AG04450 (cell line): ENCODE measurements at regions of chr12 and their contacts with region 1.

Region 1: GRCh38 chr12:113980537-113981337 is 14.6 kb upstream of the RBM19 start:
- DNase-seq: peak; percentile 47
- H3K4me3 ChIP-seq: no peak overlapping the region
- H3K27ac ChIP-seq: no peak overlapping the region
- H3K27me3 ChIP-seq: peaks cover 12% of the 10 kb centered on the region
- CTCF ChIP-seq: peak; percentile 100

Region 2: DNA sequence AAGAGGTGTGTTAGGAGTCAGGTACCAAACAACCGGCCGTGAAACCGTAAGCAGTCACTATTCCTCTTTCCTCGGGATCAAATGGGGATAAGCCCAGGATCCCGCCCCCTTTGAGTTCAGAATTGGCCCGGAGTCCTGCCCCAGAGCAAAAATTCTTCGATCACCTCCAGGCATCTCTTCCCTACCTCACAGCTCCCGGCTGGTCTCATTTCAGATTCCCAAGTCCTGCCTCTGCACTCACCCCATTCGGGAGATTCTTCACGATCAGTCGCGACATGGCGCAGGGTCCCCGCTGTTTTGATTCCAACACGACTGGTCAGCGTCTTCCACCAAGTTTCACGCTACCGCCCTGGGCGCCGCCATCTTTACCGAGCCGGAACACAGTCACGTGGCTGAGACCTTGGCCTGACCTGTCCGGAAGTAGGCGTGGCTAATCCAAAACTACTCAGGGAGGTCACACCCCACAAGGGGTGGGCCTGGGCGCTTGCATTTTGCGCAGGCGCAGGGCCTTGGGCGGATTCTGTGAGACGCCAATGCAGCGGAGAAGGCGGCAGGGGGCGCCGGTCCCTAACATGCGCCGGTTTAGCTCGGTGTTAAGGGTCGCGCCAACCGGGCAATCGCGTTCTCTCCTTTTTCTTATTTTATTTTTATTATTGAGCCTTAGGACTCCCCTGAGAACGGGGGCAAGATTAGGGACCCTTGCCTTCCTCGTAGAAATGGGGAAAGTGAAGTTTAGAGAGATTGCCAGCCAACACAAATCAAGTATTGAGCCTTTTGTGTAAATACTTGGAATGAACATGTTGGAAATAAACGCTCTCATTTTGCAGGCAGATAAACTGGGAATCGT is 14.6 kb before region 1 on chr12 and contains the start of gene RBM19:
- CTCF ChIA-PET with region 1: interaction called, 37 read pairs
- POLR2A ChIA-PET with region 1: no interaction called
- DNase-seq: peak; percentile 94
- H3K4me3 ChIP-seq: peak within 1 kb of the TSS; percentile 92
- H3K27ac ChIP-seq: peak within 1 kb of the TSS; percentile 52
- H3K27me3 ChIP-seq: peaks cover 7% of the 10 kb centered on the region
- CTCF ChIP-seq: peak; percentile 94
- polyA plus RNA-seq, gene RBM19: 10.6 and 12.4 TPM in 2 replicates

Region 3: GRCh38 chr12:114166362-114166761 is 185.6 kb after region 1 on chr12:
- CTCF ChIA-PET with region 1: interaction called, 10 read pairs
- POLR2A ChIA-PET with region 1: no interaction called
- DNase-seq: peak; percentile 6
- H3K4me3 ChIP-seq: no peak overlapping the region
- H3K27ac ChIP-seq: no peak overlapping the region
- H3K27me3 ChIP-seq: no peaks in the 10 kb centered on the region
- CTCF ChIP-seq: peak; percentile 68

Region 4: DNA sequence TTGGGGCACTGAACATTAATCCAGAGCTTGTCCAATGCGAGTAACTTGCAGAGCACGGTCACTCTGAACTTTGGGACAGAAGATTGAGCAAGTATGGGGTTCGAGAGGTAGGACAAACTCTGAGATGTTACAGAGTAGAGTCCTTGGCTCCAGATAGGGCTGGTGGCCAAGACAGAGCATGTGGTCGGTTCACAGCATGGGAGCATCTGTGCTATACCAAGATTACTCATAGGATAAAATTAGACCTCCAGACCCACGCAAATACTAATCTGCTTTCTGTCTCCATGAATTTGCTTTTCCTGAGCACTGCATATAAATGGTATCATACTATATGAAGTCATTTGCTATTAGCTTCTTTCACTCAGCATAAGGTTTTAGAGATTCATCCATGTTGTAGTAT is 518.6 kb after region 1 on chr12:
- CTCF ChIA-PET with region 1: interaction called, 12 read pairs
- POLR2A ChIA-PET with region 1: no interaction called
- DNase-seq: no peak
- H3K4me3 ChIP-seq: no peak overlapping the region
- H3K27ac ChIP-seq: no peak overlapping the region
- H3K27me3 ChIP-seq: peaks cover 18% of the 10 kb centered on the region
- CTCF ChIP-seq: no peak

Region 5: DNA sequence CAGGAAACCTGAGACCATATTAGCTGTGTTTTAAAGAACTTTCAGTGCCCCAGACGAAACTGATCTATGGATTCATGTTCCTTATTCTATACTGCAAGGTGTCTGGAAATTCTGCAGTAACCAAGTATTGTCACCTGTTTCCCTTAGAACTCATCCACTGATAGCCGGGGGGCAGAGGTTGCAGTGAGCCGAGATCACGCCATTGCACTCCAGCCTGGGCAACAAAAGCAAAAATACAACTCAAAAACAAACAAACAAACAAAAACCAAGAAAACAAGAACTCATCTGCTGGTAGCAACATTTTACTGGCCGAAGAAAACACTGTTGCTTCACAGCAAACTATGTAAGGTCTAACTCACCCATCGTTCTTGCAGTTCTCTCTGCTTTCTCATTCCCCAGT is 539.5 kb after region 1 on chr12:
- CTCF ChIA-PET with region 1: interaction called, 11 read pairs
- POLR2A ChIA-PET with region 1: no interaction called
- DNase-seq: no peak
- H3K4me3 ChIP-seq: no peak overlapping the region
- H3K27ac ChIP-seq: no peak overlapping the region
- H3K27me3 ChIP-seq: peaks cover 4% of the 10 kb centered on the region
- CTCF ChIP-seq: no peak

Region 6: DNA sequence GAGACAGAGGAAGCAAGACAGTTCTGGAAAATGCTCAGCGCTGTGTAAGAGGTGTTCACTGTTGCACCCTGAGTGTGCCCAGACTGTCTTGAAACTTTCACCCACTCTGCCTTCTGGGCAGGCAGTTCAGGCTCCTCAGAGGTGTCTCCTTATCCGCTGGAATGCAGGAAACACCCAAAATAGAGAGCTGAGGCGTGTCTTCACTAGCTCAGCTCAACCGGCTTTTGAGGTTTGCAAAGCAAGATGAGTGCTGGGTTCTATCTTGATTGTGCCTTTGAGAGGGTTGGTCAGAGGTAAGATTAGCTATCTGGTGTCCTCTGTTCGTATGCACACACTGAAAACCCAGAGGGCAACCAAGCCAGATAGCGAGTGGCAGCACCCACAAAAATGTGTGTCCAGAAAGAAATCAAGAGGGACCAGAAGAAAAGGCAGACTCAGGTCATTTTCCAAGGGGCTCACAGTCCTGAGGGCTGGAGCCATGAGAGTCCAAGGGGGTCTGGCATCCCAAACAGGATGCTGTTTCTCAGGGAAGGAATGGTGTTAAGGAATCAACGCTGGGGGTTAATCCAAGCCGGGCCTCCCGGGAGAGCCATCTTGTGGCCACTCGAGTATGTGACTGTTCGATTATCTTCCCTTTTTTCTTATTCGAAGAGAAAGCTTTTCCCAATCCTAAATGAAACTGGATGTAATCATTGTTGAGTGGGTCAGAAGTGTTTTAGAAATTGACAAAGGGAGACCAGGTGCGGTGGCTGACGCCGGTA is 656.2 kb after region 1 on chr12:
- CTCF ChIA-PET with region 1: interaction called, 86 read pairs
- POLR2A ChIA-PET with region 1: no interaction called
- DNase-seq: no peak
- H3K4me3 ChIP-seq: no peak overlapping the region
- H3K27ac ChIP-seq: no peak overlapping the region
- H3K27me3 ChIP-seq: peaks cover 2% of the 10 kb centered on the region
- CTCF ChIP-seq: peak; percentile 64

Region 7: GRCh38 chr12:115916910-115917668 is 1936.4 kb after region 1 on chr12:
- CTCF ChIA-PET with region 1: interaction called, 27 read pairs
- POLR2A ChIA-PET with region 1: no interaction called
- DNase-seq: no peak
- H3K4me3 ChIP-seq: no peak overlapping the region; the same call in 1 of the 2 replicates
- H3K27ac ChIP-seq: no peak overlapping the region
- H3K27me3 ChIP-seq: peaks cover 5% of the 10 kb centered on the region
- CTCF ChIP-seq: peak; percentile 83